ENCODE measurements at regions of chr3 and their contacts with region 1.

Region 1: DNA sequence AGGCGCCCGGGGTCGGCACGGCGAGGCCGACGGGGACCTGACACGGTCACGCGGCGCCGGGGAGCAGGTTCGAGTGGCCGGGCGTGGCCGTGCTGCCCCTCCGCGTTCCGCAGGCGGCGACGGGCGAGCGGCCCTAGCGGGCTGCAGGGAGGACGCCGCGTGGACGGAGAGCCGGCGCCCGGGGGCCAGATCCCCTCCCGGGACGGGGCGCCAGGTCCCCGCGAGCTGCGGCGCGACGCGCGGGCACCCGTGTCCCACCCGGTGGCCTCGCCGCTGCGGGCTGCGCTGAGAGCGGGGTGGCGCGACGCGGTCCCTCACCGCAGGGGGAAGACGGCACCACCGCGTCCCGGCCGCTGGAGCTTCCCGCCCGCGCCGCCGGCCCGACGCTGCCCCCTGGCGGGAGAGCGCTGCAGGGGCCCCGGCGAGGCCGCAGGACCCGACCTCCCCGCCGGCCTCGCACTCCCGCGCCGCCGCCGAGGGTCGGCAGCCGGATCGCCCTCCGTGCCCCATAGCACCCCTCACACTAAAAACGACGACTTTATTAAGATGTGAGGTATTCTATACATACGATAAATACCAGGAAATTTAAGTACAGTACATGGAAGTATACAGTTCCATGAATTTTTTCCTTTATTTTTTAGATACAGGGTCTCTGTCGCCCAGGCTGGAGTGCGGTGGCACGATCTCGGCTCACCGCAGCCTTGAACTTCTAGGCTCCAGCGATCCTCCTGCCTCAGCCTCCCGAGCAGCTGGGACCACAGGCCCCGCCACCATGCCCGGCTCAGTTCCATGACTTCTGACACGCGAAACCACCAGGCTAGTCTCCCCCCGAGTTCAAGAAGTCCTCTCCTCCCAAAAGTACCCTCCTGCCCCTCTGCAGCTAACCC is 1.3 kb upstream of the PIGZ start:
- DNase-seq: peak; percentile 94
- H3K4me3 Mint-ChIP-seq: peak overlapping the region; percentile 71
- H3K27ac Mint-ChIP-seq: peak overlapping the region; percentile 75
- H3K4me1 Mint-ChIP-seq: peaks cover 17% of the 10 kb centered on the region
- H3K27me3 Mint-ChIP-seq: peaks cover 10% of the 10 kb centered on the region

Region 2: GRCh38 chr3:196821806-196822355 is 148.0 kb before region 1 on chr3:
- intact Hi-C with region 1: no loop called
- DNase-seq: no peak
- H3K4me3 Mint-ChIP-seq: no peak overlapping the region
- H3K27ac Mint-ChIP-seq: no peak overlapping the region
- H3K4me1 Mint-ChIP-seq: no peaks in the 10 kb centered on the region
- H3K27me3 Mint-ChIP-seq: no peaks in the 10 kb centered on the region

Region 3: GRCh38 chr3:196837819-196838420 is 132.0 kb before region 1 on chr3:
- intact Hi-C with region 1: loop called (anchors 1 kb)
- DNase-seq: peak; percentile 91
- H3K4me3 Mint-ChIP-seq: no peak overlapping the region
- H3K27ac Mint-ChIP-seq: no peak overlapping the region
- H3K4me1 Mint-ChIP-seq: peaks cover 3% of the 10 kb centered on the region
- H3K27me3 Mint-ChIP-seq: no peaks in the 10 kb centered on the region

Region 4: DNA sequence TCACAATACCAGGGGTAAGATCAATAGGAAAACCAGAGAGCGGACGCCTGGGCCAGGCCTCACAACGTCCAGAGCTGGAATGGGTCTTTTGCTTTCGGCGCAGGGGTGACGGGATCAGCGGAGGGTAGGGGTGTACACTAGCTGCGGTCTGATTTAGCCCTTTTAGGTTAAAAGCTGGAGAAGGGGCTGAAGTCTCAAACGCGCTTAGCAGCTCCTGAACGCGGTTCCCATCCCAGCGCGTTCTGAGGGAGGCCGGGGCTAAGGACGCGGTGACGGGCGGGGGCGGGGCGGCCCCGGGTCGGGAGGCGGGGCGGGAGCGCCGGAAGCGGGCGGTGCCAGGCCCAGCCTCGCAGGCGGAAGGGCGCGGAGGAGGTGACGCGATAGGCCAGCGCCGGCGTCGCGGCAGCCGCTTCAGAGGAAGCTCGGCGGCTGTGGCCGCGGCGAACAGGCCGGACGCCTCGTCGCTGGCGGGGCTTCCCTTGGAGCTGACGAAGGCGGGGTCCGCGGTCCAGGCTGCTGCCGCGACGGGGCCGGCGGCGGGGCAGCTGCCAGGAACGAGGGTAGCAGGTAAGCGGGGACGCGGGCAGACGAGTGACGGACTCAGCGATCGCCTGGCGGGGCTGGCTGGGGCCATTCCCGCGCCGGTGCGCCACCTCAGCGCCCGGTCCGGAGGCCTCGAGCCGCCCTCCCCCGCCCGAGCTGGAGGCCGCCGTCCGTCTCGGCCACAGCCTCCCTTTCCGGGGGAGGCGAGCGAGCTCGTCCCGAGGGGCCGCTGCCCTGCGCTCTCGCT is 102.2 kb before region 1 on chr3 and contains the start of gene SENP5:
- intact Hi-C with region 1: loop called (anchors 1 kb)
- DNase-seq: peak; percentile 97
- H3K4me3 Mint-ChIP-seq: peak within 1 kb of the TSS; percentile 96
- H3K27ac Mint-ChIP-seq: peak within 1 kb of the TSS; percentile 93
- H3K4me1 Mint-ChIP-seq: peaks cover 17% of the 10 kb centered on the region
- H3K27me3 Mint-ChIP-seq: no peaks in the 10 kb centered on the region
- total RNA-seq, gene SENP5: 44.2 and 47.2 TPM in 2 replicates

Region 5: GRCh38 chr3:196942226-196942914 is 27.5 kb before region 1 on chr3 and contains the start of gene NCBP2:
- intact Hi-C with region 1: loop called (anchors 1 kb)
- DNase-seq: peak; percentile 100
- H3K4me3 Mint-ChIP-seq: peak within 1 kb of the TSS; percentile 89
- H3K27ac Mint-ChIP-seq: peak within 1 kb of the TSS; percentile 95
- H3K4me1 Mint-ChIP-seq: peaks cover 41% of the 10 kb centered on the region
- H3K27me3 Mint-ChIP-seq: peaks cover 2% of the 10 kb centered on the region
- total RNA-seq, gene NCBP2: 101 and 105 TPM in 2 replicates

Region 6: DNA sequence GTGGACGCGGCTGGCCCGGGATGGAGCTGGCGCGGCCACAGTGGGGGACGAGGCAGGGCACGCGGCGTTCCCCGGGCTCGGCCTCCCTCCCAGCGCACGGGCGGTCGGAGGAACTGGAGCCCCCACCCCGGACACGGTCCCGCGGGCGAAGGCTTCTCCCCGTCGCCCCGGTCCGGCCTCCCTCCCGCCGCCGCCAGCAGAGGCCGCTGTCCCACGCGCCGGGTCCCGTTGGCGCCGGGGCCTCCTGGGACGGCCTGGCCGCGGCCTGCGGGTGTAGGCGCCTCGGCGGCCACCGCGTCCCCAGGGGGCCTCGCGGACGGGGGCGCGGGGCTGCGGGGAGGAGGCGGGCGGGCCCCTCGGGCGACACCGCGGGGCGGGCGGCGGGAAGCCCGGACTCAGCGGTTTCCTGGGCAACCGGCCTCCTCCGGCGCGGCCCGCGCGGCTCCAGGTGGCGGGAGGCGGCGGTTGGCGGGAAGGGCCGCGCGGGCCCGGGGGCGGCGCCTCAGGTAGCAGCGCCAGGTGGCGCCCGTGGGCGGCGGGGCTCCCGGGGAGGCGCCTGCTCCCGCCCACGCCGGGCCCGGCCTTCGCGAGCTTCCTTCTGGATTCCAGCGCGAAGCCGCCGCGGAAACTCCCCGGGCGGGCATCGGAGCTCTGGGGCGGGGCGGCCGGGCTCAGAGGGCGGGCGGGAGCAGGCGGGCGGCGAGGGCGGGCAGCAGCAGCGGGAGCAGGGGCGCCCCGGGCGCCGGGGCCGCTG is 33.0 kb after region 1 on chr3:
- intact Hi-C with region 1: loop called (anchors 1 kb)
- DNase-seq: peak; percentile 95
- H3K4me3 Mint-ChIP-seq: no peak overlapping the region
- H3K27ac Mint-ChIP-seq: no peak overlapping the region
- H3K4me1 Mint-ChIP-seq: peaks cover 11% of the 10 kb centered on the region
- H3K27me3 Mint-ChIP-seq: peaks cover 2% of the 10 kb centered on the region

Region 7: GRCh38 chr3:197186887-197187588 is 217.1 kb after region 1 on chr3:
- intact Hi-C with region 1: loop called (anchors 10 kb)
- DNase-seq: peak; percentile 74
- H3K4me3 Mint-ChIP-seq: no peak overlapping the region
- H3K27ac Mint-ChIP-seq: no peak overlapping the region
- H3K4me1 Mint-ChIP-seq: peaks cover 8% of the 10 kb centered on the region
- H3K27me3 Mint-ChIP-seq: no peaks in the 10 kb centered on the region